ENCODE measurements at regions of chr5 and their contacts with region 1.

Region 1: DNA sequence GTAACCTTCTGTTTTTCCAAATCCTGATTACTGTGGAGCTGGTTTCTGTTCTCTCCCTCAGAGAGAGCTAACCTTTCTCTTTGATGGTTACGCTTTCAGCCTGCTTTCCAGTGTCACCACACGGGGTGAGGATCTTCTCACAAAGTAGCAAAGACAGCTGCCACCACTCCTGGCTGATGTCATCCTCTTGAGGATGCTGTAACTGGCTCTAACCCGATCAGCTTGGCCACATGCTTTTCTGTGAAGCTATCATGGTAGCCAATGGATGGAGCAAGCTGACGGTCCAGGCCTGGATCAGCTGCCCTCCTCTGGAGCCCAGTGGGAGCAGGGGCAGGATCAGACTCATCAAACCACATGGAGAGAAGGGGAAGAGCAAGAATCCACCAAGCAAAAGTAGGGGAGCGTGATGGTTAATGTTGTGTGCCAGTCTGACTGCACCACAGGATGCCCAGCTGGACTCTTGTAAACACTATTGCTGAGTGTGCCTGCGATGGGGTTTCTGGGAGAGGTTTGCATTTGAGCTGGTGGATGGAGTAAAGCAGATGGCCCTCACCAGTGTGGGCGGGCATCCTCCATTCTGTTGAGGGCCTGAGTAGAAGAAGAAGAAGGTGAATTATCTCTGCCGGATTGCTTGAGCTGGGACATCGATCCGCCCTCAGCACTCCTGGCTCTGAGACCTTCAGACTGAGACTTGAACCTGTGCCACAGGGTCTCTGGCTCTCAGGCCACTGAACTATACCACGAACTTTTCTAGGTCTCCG is 26.8 kb upstream of the ZNF354A start:
- DNase-seq: no peak
- ATAC-seq: no peak
- H3K4me3 ChIP-seq: no peak overlapping the region
- H3K27ac ChIP-seq: no peak overlapping the region
- H3K4me1 ChIP-seq: no peaks in the 10 kb centered on the region
- H3K27me3 ChIP-seq: peaks cover 33% of the 10 kb centered on the region
- CTCF ChIP-seq: no peak

Region 2: GRCh38 chr5:178711572-178711971 is 45.7 kb before region 1 on chr5:
- CTCF ChIA-PET with region 1: no interaction called
- POLR2A ChIA-PET with region 1: no interaction called
- intact Hi-C with region 1: no loop called
- DNase-seq: no peak
- ATAC-seq: no peak
- H3K4me3 ChIP-seq: no peak overlapping the region
- H3K27ac ChIP-seq: no peak overlapping the region
- H3K4me1 ChIP-seq: no peaks in the 10 kb centered on the region
- H3K27me3 ChIP-seq: no peaks in the 10 kb centered on the region
- CTCF ChIP-seq: no peak

Region 3: GRCh38 chr5:178786859-178787760 is 29.9 kb after region 1 on chr5:
- CTCF ChIA-PET with region 1: no interaction called
- POLR2A ChIA-PET with region 1: no interaction called
- intact Hi-C with region 1: loop called (anchors 1 kb)
- DNase-seq: peak; percentile 98
- ATAC-seq: peak; percentile 93
- H3K4me3 ChIP-seq: peak overlapping the region; percentile 5; the same call in 1 of the 2 replicates
- H3K27ac ChIP-seq: peak overlapping the region; percentile 86
- H3K4me1 ChIP-seq: peaks cover 43% of the 10 kb centered on the region
- H3K27me3 ChIP-seq: no peaks in the 10 kb centered on the region
- CTCF ChIP-seq: peak; percentile 36; the same call in 1 of the 2 replicates

Region 4: DNA sequence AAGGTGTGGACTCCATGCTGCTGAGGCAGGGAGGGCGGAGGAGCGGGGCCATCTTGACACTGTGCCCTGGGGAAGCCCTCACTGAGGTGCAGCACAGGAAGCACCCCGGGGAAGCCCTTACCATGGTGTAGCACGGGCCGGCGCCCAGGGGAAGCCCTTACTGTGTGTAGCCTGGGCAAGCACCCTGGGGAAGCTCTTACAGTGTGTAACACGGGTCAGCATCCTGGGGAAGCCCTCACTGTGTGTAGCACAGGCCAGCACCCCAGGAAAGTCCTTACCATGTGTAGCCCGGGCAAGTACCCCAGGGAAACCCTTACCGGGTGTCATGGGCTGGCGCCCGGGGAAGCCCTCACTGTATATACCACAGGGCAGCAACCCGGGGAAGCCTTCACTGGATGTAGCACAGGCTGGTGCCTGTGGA is 39.9 kb after region 1 on chr5:
- CTCF ChIA-PET with region 1: no interaction called
- POLR2A ChIA-PET with region 1: no interaction called
- intact Hi-C with region 1: no loop called
- DNase-seq: no peak
- ATAC-seq: no peak
- H3K4me3 ChIP-seq: no peak overlapping the region
- H3K27ac ChIP-seq: no peak overlapping the region
- H3K4me1 ChIP-seq: no peaks in the 10 kb centered on the region
- H3K27me3 ChIP-seq: peaks cover 21% of the 10 kb centered on the region
- CTCF ChIP-seq: no peak

Region 5: DNA sequence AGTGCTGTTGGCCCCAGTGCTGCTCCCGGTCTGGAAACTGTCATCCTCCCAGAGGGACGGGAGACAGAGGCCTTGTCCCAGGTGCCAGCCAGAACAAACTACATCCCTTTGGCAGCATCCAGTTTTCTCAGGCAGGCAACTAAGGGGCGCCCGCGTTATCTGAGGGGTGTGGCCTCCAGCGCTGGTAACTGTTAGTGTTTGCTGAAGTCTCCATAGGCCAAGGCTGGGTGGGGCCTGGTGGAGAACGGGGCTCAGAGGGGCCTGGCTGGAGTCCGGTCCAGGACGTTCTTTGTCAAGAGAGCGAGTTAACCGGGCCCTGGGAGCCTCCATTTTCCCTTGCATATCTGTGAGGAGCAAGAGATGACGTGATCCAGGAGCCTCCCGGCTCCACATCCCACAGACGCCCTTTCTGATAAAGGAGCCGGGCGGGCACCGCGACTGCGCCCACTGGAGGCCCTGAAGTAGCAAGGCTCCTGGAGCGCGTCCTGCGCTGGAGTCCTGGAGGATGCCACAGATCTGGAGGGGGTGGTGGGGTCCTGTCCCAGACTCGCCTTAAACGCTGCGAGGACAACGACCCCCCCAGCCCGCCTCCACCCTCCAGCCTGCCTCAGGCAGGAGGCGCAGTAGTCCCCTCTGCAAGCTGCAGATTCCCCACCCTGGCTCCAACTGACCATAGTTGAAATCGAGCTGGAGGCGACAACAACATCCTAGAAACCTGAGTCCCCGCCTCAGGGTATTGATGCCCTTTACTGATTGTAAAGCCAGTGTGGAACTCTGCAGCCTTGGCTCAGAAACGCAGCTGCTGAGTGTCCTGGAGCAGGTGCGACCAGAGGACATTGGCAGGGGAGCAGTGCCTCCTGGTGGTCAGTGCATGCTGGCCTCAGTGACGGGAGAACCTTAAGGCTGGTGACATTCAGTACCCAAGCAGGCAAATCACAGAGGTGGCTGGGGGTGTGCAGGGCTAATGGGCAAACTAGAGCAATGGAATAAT is 81.8 kb after region 1 on chr5:
- CTCF ChIA-PET with region 1: no interaction called
- POLR2A ChIA-PET with region 1: no interaction called
- intact Hi-C with region 1: no loop called
- DNase-seq: peak; percentile 82
- ATAC-seq: peak; percentile 98
- H3K4me3 ChIP-seq: no peak overlapping the region
- H3K27ac ChIP-seq: no peak overlapping the region
- H3K4me1 ChIP-seq: no peaks in the 10 kb centered on the region
- H3K27me3 ChIP-seq: peaks cover 10% of the 10 kb centered on the region; the same call in 1 of the 2 replicates
- CTCF ChIP-seq: peak; percentile 89

Measured in PC-3 (cell line).